Dendritic cell treated with granulocyte-macrophage colony-stimulating factor and Interleukin-4, amounts not matched to agents 40 ng/mL and 50 ng/mL, for 4 days (primary cell): ENCODE measurements at regions of chr20 and their contacts with region 1.

Region 1: DNA sequence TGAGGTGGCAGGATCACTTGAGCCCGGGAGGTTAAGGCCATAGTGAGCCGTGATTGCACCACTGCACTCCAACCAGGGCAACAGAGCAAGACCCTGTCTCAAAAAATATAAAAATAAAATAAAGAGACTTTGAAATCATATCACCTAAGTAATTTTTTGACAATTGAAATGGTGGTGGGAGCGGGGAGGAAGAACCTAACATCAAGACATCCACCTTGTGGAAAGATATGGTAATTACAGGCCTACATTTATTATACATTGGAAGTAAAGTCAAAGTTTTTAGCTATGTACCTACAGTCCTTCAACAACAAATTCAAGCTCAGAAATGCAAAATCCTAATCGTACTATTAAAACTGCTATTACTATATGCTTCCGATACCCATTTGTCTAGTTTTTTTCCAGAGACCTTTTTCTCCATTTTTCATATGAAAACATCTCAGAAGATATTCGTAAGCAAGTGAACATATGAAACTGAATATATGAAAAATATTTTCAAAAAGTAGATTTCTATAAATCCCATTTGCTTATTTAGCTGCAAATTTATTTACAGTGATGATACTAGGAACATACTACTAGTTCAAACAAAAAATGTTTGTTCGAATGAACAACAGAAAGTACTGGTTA is 83.3 kb downstream of the SYCP2 start:
- H3K4me3 Mint-ChIP-seq: no peak overlapping the region
- H3K27ac Mint-ChIP-seq: no peak overlapping the region
- H3K4me1 Mint-ChIP-seq: no peaks in the 10 kb centered on the region
- H3K27me3 Mint-ChIP-seq: no peaks in the 10 kb centered on the region

Region 2: GRCh38 chr20:59765599-59766177 is 84.4 kb before region 1 on chr20:
- intact Hi-C with region 1: no loop called
- H3K4me3 Mint-ChIP-seq: no peak overlapping the region
- H3K27ac Mint-ChIP-seq: no peak overlapping the region
- H3K4me1 Mint-ChIP-seq: peaks cover 6% of the 10 kb centered on the region
- H3K27me3 Mint-ChIP-seq: peaks cover 27% of the 10 kb centered on the region

Region 3: DNA sequence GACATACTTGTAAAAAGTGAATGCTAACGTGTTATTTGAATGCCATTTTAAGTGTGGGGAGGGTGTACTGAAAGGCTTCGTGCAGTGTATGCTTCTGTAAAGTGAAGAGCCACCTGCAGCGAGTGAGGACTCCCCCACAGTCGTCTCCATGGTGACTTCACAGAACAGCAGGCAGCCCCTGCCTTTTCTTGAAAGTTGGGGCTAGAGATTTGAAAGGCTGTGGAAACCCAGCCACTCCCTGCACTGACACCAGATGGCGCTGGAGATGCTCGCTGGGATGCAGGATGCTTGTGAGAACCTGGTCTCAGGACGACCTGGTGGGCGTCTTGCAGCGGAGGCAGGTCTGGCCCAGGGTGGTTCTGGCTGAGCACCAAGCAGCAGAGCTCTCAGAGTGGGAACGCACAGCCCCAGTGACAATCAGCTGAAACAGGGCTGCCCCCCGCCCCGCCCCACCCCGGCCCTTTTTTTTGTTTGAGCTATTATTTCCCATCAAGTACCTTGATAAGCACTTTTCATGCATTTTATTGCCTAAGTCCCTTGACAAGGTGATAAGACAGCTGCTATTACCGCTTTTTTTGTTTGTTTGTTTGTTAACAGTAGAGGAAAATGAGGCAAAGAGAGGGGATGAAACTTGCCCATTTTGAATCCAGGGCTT is 67.0 kb before region 1 on chr20:
- intact Hi-C with region 1: loop called (anchors 1 kb)
- H3K4me3 Mint-ChIP-seq: no peak overlapping the region
- H3K27ac Mint-ChIP-seq: no peak overlapping the region
- H3K4me1 Mint-ChIP-seq: peaks cover 30% of the 10 kb centered on the region
- H3K27me3 Mint-ChIP-seq: peaks cover 3% of the 10 kb centered on the region

Region 4: GRCh38 chr20:59912609-59913008 is 62.5 kb after region 1 on chr20:
- intact Hi-C with region 1: no loop called
- H3K4me3 Mint-ChIP-seq: no peak overlapping the region
- H3K27ac Mint-ChIP-seq: no peak overlapping the region
- H3K4me1 Mint-ChIP-seq: peaks cover 6% of the 10 kb centered on the region
- H3K27me3 Mint-ChIP-seq: no peaks in the 10 kb centered on the region

Region 5: DNA sequence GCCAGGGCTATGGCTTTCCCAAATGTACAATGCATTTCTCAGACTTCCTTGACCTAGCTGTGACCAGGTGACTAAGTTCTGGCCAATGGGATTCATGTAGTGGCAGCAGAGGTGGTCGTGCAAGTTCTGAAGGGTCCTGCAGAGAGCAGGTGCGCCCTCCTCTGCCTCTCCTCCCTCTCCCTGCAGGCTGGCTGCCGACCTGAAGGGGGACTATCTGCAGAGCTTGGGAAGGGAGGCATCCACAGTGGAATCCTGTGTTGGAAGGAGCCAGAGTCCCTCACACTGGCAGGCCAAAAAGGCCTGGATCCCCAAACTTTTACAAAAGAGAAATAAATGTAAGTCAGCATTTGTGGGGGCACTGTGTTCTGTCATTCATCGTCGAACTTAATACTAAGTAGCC is 174.7 kb after region 1 on chr20:
- intact Hi-C with region 1: no loop called
- H3K4me3 Mint-ChIP-seq: no peak overlapping the region
- H3K27ac Mint-ChIP-seq: no peak overlapping the region
- H3K4me1 Mint-ChIP-seq: peaks cover 4% of the 10 kb centered on the region
- H3K27me3 Mint-ChIP-seq: no peaks in the 10 kb centered on the region